Activated naive CD8-positive, alpha-beta T cell treated with anti-CD3 and anti-CD28 coated beads, Interleukin-2, amount 10 ng/mL, durations not matched to agents 7 days and 5 days (primary cell): ENCODE measurements at regions of chr18 and their contacts with region 1.

Region 1: GRCh38 chr18:12838178-12838634 is 45.8 kb downstream of the PTPN2 start:
- DNase-seq: no peak
- ATAC-seq: no peak
- H3K4me3 Mint-ChIP-seq: peak overlapping the region; percentile 83
- H3K27ac Mint-ChIP-seq: peak overlapping the region; percentile 92
- H3K4me1 Mint-ChIP-seq: peaks cover 52% of the 10 kb centered on the region
- H3K27me3 Mint-ChIP-seq: no peaks in the 10 kb centered on the region

Region 2: DNA sequence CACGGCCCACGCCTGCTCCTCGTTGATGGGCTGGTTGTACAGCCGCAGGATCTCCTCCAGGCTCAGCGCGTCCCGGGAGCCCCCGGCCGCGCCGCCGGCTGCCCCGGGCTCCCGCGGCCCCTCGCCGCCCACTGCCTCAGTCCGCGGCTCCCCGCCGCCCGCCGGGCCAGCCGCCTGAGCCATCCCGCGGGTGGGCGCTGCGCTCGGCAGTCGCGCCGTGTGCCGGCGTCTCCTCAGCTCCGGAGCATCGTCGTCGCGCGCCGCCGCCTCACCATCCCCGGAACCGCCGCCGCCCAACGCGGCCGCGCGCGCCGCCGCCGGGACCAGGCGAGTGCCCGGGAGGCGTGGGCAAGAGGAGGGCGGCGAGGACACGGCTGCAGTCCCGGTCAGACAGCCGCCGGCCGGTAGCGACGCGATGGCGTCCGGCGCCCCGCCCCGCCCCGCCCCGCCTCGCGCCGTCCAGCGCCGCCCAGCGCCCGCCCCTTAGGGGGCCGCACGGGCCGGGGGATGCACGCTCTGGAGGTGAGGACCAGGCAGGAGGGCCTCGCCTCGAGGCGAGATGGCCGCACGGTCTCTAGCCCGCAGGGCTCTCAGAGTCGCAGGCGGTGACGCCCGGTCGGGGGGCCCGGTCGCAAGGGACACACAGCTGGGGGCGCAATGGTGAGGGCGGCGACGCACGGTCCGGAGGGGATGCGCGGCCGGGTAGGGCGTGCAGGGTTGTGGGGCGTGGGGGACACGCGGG is 180.4 kb before region 1 on chr18 and contains the start of gene SPIRE1:
- POLR2A ChIA-PET with region 1: no interaction called
- DNase-seq: peak; percentile 69
- ATAC-seq: peak; percentile 71
- H3K4me3 Mint-ChIP-seq: peak within 1 kb of the TSS; percentile 85
- H3K27ac Mint-ChIP-seq: peak within 1 kb of the TSS; percentile 19
- H3K4me1 Mint-ChIP-seq: peaks cover 21% of the 10 kb centered on the region
- H3K27me3 Mint-ChIP-seq: peaks cover 25% of the 10 kb centered on the region
- total RNA-seq, gene SPIRE1: 1.7 to 3.6 TPM

Region 3: DNA sequence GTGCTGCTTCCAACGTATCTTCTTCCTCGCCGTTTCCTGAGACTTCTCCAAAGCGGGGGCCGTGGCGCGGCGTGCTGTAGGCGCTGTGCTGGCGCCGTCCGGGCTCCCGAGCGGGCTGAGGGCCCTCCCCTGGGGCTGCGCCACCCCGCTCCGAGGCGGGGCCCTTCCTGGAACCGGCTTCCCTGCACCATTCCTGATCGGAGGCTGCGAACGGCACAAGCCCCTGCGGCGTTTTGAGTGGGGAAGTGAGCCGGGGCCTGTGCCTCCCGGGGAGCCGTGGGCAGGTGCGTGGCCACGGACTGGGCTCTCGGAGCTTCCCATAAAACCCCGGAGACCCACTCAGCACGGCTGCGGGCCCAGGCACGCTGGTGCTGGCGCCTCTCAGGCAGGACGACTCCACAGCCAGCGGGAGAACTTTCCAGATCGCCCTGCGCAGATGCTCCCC is 60.7 kb before region 1 on chr18:
- POLR2A ChIA-PET with region 1: interaction called, 11 read pairs
- DNase-seq: no peak
- ATAC-seq: no peak
- H3K4me3 Mint-ChIP-seq: peak overlapping the region; percentile 60
- H3K27ac Mint-ChIP-seq: no peak overlapping the region
- H3K4me1 Mint-ChIP-seq: peaks cover 2% of the 10 kb centered on the region
- H3K27me3 Mint-ChIP-seq: no peaks in the 10 kb centered on the region